OCI-LY7 (cell line): ENCODE measurements at regions of chr2 and their contacts with region 1.

Region 1: GRCh38 chr2:153536115-153536514 is 57.6 kb upstream of the RPRM start:
- DNase-seq: no peak
- H3K4me3 ChIP-seq: no peak overlapping the region
- H3K27ac ChIP-seq: no peak overlapping the region
- H3K4me1 ChIP-seq: no peaks in the 10 kb centered on the region
- CTCF ChIP-seq: no peak

Region 2: DNA sequence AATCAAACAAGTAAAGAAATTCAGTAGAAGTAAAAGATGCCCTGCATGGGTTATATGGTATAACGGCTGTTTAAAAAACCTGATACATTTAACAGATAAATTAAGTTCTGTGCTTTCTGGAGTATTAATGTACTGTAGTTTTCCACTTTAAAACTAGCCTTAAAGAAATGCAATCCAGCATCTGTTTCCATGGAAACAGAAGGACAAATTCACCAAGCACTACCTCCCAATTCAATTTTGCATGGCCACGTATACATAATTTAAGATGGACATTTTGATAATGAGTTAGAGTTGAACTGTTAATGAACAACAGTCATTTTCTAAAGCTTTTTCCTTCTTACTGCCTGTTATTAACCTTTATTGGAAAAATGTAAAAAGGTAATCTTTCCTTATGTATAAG is 863.7 kb after region 1 on chr2:
- CTCF ChIA-PET with region 1: no interaction called
- POLR2A ChIA-PET with region 1: interaction called, 10 read pairs
- intact Hi-C with region 1: no loop called
- DNase-seq: no peak
- H3K4me3 ChIP-seq: no peak overlapping the region
- H3K27ac ChIP-seq: no peak overlapping the region
- H3K4me1 ChIP-seq: no peaks in the 10 kb centered on the region
- CTCF ChIP-seq: no peak